HEK293T (cell line): ENCODE measurements at regions of chr2 and their contacts with region 1.

Region 1: GRCh38 chr2:178522950-178523595 is 42.8 kb downstream of the PLEKHA3 start:
- DNase-seq: peak; percentile 93

Region 2: DNA sequence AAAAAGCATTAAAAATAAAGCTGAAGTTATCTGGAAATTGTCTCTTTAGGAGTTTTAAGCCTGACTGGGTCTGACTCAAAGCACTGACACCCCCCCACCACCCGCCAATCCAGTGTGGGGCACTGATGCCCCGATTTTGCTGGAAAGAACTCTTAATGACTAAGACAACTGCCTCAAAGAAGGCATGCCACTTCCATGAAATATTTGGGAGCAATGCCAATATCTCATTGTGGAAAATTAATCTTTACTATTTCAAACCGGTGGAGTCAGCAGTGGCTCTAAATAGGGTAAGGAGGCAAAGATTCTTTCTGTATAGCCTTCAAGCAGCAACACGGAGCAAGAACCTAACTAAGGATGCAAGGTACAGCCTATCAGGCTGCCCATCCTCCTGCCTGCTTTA is 49.1 kb before region 1 on chr2:
- CTCF ChIA-PET with region 1: no interaction called
- POLR2A ChIA-PET with region 1: no interaction called
- DNase-seq: no peak

Region 3: DNA sequence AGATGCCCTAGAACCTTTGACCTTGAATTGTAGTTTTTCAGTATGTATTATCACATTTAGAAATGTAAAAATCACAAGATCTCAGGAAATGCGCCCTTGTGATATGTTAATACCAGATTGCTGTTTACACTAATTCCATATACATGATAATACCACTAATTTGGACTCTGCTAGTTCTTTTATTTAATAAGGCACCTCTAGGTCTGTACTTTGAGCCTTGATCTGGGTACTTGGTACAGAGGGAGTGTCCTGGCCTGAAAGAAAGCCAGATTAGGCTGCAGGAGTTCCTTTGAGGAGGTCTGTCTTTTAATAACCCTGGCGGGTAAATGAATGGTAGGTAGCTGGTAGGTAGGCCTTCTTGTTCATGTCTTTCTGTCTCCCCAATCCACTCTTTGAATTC is 16.5 kb before region 1 on chr2:
- CTCF ChIA-PET with region 1: no interaction called
- POLR2A ChIA-PET with region 1: no interaction called
- DNase-seq: no peak

Region 4: DNA sequence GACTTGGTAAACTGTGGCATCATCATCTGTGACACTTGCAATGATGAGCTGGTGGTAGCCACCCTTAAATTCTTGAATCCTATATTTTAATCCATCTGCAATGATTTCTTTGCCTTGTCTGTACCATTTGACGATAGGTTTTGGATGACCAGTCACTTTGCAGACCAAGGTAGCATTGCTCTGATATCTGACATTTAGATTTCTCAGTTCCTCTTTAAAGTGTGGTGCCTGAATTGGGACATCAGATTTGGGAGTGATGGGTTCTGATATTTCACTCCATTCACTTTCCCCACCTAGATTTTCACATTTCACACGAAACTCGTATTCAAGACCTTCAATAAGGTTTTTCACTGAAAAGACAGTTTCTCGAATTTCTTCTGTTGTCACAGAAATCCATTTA is 13.0 kb after region 1 on chr2:
- CTCF ChIA-PET with region 1: no interaction called
- POLR2A ChIA-PET with region 1: interaction called, 10 read pairs
- DNase-seq: no peak

Region 5: GRCh38 chr2:178692845-178693244 is 169.8 kb after region 1 on chr2:
- CTCF ChIA-PET with region 1: no interaction called
- POLR2A ChIA-PET with region 1: no interaction called
- DNase-seq: no peak